ENCODE measurements at regions of chr18 and their contacts with region 1.

Region 1: DNA sequence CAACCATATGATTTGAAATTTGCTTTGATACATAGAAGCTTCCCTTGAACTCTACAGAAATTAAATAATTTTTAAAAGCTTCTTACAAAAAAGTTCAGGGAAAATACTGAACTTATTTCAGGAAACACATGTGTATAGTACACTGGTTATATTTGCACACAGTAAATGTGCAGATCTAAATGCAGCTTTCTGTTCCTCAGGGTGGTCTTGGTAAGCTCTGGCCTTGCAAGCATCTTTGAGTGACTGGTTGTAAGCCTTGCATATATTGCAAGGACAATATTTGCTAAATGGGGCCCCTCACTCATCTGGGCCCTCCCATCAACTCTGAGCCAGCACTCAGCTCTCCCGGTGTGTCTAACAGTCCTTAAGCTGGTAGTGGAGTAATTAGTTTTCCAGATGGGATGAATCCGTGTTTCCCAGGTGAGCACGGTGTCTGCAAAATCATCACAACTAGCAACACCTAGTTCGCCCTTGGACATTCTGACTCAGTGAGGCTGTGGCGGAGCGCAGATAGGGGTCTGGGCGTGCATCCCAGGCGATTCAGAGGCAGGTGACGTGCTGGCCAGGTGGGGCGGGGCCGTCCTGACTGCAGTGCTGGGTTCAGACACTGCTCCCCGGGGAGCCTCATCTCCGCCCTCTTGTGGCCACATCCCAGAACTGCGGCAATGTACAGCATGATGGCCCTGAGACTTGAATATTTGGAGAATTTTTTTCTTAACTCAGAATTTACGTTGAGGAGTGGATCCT is 149.6 kb downstream of the MBP start:
- DNase-seq: peak; percentile 79 to 97 (median 90)
- ATAC-seq: peak; percentile 93 to 98 (median 96)
- H3K4me3 ChIP-seq: peak overlapping the region in 1 of 4 donors; percentile 14
- H3K27ac ChIP-seq: no peak overlapping the region
- H3K4me1 ChIP-seq: peaks cover 0 to 2% (median 0%) of the 10 kb centered on the region in 3 donors
- H3K27me3 ChIP-seq: no peaks in the 10 kb centered on the region
- CTCF ChIP-seq: peak; percentile 90 to 94 (median 92)

Region 2: DNA sequence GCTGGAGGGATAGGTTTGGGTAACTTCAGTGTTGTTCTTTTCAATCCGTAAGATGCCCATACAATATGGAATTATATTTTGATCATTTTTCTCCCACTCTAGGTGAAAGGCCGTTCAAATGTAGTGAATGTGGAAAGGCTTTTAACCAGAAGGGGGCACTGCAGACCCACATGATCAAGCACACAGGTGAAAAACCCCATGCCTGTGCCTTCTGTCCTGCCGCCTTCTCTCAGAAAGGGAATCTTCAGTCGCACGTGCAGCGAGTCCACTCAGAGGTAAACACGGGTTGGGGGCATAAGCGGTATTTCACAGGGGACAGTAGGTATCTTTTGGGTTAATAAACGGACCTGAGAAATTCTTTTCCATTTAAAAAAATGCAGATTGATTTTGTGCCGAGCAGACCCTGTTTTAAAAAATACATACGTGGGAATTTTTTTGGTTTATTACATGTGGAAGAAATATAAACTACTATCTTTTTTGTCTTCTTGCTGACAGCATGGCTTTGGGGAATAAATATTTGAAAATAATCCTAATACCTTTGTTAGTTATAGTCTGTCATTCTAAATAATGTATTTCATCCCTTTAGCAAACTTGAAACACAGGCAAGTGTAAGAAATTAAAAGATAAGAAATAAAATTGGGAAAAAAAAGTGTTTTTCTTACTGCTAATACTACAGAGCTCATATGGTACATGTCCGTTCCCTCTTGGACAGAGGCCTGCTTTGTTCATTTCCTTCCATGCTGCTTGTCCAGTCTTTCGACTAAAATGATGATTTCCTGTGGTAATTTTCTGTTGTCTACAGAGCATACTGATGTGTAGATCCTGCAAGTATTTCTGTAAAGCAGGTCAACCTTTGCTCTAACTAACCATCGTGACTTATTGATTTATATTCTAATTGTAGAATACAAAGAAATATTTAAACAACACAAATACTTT is 107.4 kb before region 1 on chr18:
- intact Hi-C with region 1: loop called in 1 of 3 experiments (anchors 10 kb)
- DNase-seq: peak in 3 of 6 donors; percentile 33 to 64 (median 41)
- ATAC-seq: peak; percentile 85 to 96 (median 94)
- H3K4me3 ChIP-seq: no peak overlapping the region
- H3K27ac ChIP-seq: no peak overlapping the region
- H3K4me1 ChIP-seq: no peaks in the 10 kb centered on the region
- H3K27me3 ChIP-seq: no peaks in the 10 kb centered on the region
- CTCF ChIP-seq: peak; percentile 25 to 58 (median 38)

Region 3: DNA sequence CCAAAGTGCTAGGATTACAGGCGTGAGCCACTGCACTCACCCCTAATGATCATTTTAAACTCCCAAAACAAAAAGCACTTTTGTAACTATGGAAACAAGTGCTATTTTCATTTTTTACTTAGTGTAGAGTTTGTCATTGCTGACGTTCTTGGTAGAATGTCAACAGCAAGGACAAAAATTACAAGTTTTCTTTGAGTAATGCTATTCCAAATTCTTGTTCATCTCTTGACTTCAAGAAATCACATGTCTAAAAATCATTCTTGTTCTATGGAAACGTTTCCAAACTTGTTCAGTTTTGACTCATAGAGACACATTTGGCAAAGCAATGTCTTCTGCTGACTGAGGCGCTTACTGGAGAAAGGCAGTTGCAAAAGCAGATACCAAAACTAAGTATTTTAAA is 66.9 kb after region 1 on chr18:
- intact Hi-C with region 1: no loop called
- DNase-seq: no peak
- ATAC-seq: peak in 1 of 4 donors; percentile 18
- H3K4me3 ChIP-seq: no peak overlapping the region
- H3K27ac ChIP-seq: no peak overlapping the region
- H3K4me1 ChIP-seq: no peaks in the 10 kb centered on the region
- H3K27me3 ChIP-seq: no peaks in the 10 kb centered on the region
- CTCF ChIP-seq: no peak

Region 4: DNA sequence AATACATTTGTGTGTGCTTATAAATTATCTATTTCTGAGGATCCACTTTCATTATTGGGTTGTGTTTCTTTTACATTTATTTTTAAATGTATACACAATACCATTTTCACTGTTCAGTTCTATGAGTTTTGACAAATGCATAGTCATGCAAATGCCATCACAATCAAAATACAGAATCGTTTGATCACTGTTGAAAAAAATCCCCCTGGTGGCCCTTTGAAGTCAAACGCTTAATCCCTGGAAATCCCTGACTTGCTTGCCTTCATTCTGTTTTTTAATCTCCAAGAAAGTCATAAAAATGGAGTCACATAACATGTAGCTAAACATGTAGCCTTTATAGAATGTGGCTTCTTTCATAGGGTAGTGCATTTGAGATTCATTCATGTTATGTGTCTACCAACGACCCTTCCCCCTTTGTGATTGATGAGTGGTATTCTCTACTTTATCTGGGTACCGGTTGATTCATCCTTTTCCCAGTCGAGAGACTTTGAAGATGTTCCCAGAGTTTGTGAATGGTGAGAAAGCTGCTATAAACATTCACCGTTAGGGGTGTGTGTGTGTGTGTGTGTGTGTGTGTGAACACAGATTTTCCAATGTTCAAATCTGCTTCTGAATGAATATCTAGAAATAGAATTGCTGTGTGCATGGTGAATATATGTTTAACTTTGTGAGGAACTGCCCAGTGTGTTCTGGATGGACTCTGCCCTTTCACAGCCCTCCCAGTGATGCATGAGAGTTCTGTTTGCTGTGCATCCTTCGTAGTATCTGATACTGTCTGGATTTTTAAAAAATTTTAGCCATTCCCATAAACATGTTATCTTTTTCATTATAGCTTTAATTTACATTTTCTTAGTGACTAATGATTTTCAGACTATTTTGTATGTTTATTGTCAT is 440.2 kb after region 1 on chr18:
- intact Hi-C with region 1: no loop called
- DNase-seq: no peak
- ATAC-seq: no peak
- H3K4me3 ChIP-seq: no peak overlapping the region
- H3K27ac ChIP-seq: no peak overlapping the region
- H3K4me1 ChIP-seq: no peaks in the 10 kb centered on the region
- H3K27me3 ChIP-seq: no peaks in the 10 kb centered on the region
- CTCF ChIP-seq: no peak